Activated CD4-positive, alpha-beta T cell treated with anti-CD3 and anti-CD28 coated beads for 36 hours (primary cell): ENCODE measurements at regions of chr5 and their contacts with region 1.

Region 1: GRCh38 chr5:431001-431710 is 11.8 kb upstream of the EXOC3 start:
- DNase-seq: peak; percentile 73
- ATAC-seq: peak; percentile 90
- H3K4me3 Mint-ChIP-seq: no peak overlapping the region
- H3K27ac Mint-ChIP-seq: no peak overlapping the region
- H3K4me1 Mint-ChIP-seq: no peaks in the 10 kb centered on the region
- H3K27me3 Mint-ChIP-seq: peaks cover 4% of the 10 kb centered on the region

Region 2: DNA sequence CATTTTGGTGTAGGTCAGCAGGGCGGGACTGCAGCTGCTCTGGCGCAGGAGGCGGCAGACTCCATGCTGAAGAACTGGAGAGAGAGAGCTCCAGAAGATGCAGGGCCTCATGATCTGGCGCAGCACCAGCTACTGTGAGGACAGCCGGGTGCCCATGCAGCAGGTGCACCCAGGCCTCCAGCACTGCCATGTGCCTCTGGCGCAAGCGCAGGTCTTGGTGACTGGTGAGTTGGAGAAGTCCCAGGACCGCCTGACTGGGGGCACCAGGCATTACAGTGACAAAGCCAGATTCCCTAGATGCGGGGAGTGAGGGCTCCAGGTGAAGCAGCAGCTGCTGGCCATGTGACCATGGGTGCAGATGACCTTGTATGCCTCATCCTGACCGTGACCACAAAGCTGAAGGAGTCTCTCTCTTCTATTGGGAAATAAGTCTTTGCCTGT is 12.5 kb before region 1 on chr5:
- CTCF ChIA-PET with region 1: interaction called, 10 read pairs
- POLR2A ChIA-PET with region 1: no interaction called
- intact Hi-C with region 1: no loop called
- DNase-seq: no peak
- ATAC-seq: no peak
- H3K4me3 Mint-ChIP-seq: no peak overlapping the region
- H3K27ac Mint-ChIP-seq: no peak overlapping the region
- H3K4me1 Mint-ChIP-seq: peaks cover 3% of the 10 kb centered on the region
- H3K27me3 Mint-ChIP-seq: no peaks in the 10 kb centered on the region

Region 3: GRCh38 chr5:607541-608428 is 176.6 kb after region 1 on chr5:
- CTCF ChIA-PET with region 1: no interaction called
- POLR2A ChIA-PET with region 1: no interaction called
- intact Hi-C with region 1: no loop called
- DNase-seq: no peak
- ATAC-seq: no peak
- H3K4me3 Mint-ChIP-seq: no peak overlapping the region
- H3K27ac Mint-ChIP-seq: no peak overlapping the region
- H3K4me1 Mint-ChIP-seq: peaks cover 22% of the 10 kb centered on the region
- H3K27me3 Mint-ChIP-seq: peaks cover 9% of the 10 kb centered on the region